Activated naive CD4-positive, alpha-beta T cell treated with anti-CD3 and anti-CD28 coated beads for 36 hours (primary cell): ENCODE measurements at regions of chr20 and their contacts with region 1.

Region 1: GRCh38 chr20:40532103-40532502 is 156.9 kb downstream of the MAFB start:
- DNase-seq: peak; percentile 34
- H3K4me3 Mint-ChIP-seq: no peak overlapping the region
- H3K27ac Mint-ChIP-seq: no peak overlapping the region
- H3K4me1 Mint-ChIP-seq: no peaks in the 10 kb centered on the region
- H3K27me3 Mint-ChIP-seq: no peaks in the 10 kb centered on the region

Region 2: DNA sequence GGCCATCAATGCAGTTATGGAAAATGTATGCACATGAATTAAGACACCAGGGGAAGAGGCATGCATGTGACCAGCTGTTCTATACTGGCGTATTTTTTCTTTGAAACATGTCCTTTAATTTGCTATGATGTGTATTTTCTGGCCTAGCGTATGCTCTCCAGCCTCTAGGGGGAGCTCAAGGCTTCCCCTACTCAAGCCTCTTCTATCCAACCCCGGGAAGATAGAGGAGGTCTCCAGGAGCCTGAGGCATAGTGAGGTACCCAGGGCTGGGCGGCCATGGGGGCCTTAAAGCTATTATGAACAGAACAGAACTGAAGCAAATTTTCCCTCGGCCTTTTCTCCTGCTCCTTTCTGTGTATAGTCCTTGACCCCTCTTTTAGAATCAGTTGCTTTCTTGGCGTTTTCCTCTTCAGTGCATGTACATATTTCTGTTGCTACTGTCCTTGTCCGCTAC is 372.0 kb before region 1 on chr20:
- CTCF ChIA-PET with region 1: no interaction called
- intact Hi-C with region 1: loop called (anchors 5 kb)
- DNase-seq: peak; percentile 18
- H3K4me3 Mint-ChIP-seq: no peak overlapping the region
- H3K27ac Mint-ChIP-seq: no peak overlapping the region
- H3K4me1 Mint-ChIP-seq: no peaks in the 10 kb centered on the region
- H3K27me3 Mint-ChIP-seq: no peaks in the 10 kb centered on the region